ENCODE measurements at regions of chr3 and their contacts with region 1.

Region 1: GRCh38 chr3:117107946-117108345 is 398.4 kb downstream of the TUSC7 start:
- DNase-seq: no peak
- H3K4me3 ChIP-seq: no peak overlapping the region
- H3K27ac ChIP-seq: no peak overlapping the region
- H3K4me1 ChIP-seq: no peaks in the 10 kb centered on the region
- H3K27me3 ChIP-seq: no peaks in the 10 kb centered on the region
- CTCF ChIP-seq: no peak
- POLR2A ChIP-seq: no peak

Region 2: DNA sequence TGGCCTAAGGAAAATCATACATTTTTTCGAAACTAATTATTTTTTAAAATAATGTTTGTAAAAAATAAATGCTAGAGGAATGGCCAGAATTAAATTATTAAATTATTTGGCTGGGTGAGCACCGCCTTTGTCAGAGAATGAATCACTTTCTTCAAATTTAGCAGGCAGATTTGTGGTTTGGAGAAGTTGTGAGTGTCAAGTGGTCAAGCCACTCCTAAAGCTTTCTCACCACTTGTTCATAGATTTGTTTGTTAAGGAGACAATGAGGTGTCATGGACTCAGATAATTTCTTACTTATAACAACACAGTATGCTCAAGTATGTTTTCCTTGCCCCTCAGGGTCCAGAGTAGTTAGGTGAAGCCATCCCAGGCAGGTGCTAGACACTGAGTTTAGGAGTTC is 202.2 kb before region 1 on chr3:
- intact Hi-C with region 1: no loop called
- DNase-seq: no peak
- H3K4me3 ChIP-seq: no peak overlapping the region
- H3K27ac ChIP-seq: no peak overlapping the region
- H3K4me1 ChIP-seq: no peaks in the 10 kb centered on the region
- H3K27me3 ChIP-seq: no peaks in the 10 kb centered on the region
- CTCF ChIP-seq: no peak
- POLR2A ChIP-seq: no peak

Region 3: DNA sequence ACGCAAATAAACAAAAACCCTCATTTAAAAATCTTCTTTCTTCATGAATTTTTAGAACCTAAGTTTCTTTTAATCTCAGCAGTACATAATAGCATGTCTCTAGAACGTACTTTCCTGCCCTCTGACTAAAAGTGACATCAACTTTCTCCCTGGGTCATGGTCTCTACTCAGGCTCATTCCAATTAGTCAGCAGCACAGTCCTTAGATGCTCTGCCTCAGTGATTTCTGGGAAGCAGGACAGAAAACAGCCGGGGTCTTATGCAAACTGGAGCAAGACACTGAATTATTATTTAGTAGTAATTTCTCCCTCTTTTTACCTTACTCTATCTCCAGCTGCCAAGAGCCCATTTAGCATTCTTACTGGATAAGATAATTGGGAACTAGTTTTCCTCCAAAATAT is 33.1 kb before region 1 on chr3:
- intact Hi-C with region 1: no loop called
- DNase-seq: no peak
- H3K4me3 ChIP-seq: no peak overlapping the region
- H3K27ac ChIP-seq: no peak overlapping the region
- H3K4me1 ChIP-seq: no peaks in the 10 kb centered on the region
- H3K27me3 ChIP-seq: no peaks in the 10 kb centered on the region
- CTCF ChIP-seq: no peak
- POLR2A ChIP-seq: no peak

Region 4: GRCh38 chr3:117144853-117145252 is 36.9 kb after region 1 on chr3:
- intact Hi-C with region 1: loop called (anchors 1 kb)
- DNase-seq: no peak
- H3K4me3 ChIP-seq: no peak overlapping the region
- H3K27ac ChIP-seq: no peak overlapping the region
- H3K4me1 ChIP-seq: no peaks in the 10 kb centered on the region
- H3K27me3 ChIP-seq: no peaks in the 10 kb centered on the region
- CTCF ChIP-seq: no peak
- POLR2A ChIP-seq: no peak